Activated CD4-positive, alpha-beta memory T cell treated with anti-CD3 and anti-CD28 coated beads for 36 hours (primary cell): ENCODE measurements at regions of chr9 and their contacts with region 1.

Region 1: DNA sequence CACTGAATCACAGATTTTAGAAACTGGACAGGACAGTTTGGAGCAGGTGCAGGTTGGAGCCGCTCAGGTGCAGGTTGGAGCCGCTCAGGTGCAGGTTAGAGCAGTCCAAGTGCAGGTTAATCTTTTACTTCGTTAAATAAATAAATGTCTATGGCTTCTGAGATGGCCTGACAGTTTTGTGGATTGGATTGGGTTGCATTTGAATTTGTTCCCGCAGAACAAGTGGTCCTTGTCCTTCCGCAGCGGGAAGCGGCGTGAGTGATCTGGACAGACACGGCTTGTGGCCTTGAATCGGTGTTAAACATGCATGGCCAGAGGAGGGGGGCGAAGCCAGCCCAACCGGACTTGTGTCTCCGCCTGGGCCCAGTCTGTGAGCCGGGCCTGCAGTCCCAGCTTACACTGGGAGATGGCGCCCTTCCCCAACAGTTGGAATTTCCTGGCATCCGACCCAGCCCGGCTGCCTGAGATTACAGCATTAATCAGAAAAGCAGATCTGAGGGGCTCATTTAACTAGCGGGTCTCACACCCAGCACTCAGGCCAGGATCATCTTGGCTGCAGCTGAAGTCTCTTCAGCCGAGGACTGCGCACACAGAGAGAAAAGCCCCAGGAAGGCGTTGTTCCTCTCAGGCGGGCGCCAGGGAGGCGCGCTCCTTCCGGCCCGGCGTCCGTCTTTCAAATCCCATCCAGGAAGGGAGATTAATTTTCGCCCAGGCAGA is 1.5 kb upstream of the OLFM1 start:
- DNase-seq: peak; percentile 67
- H3K4me3 Mint-ChIP-seq: no peak overlapping the region
- H3K27ac Mint-ChIP-seq: no peak overlapping the region
- H3K4me1 Mint-ChIP-seq: peaks cover 3% of the 10 kb centered on the region
- H3K27me3 Mint-ChIP-seq: peaks cover 43% of the 10 kb centered on the region

Region 2: GRCh38 chr9:135060461-135061116 is 25.4 kb before region 1 on chr9:
- CTCF ChIA-PET with region 1: no interaction called
- POLR2A ChIA-PET with region 1: no interaction called
- intact Hi-C with region 1: no loop called
- DNase-seq: no peak
- H3K4me3 Mint-ChIP-seq: no peak overlapping the region
- H3K27ac Mint-ChIP-seq: no peak overlapping the region
- H3K4me1 Mint-ChIP-seq: peaks cover 3% of the 10 kb centered on the region
- H3K27me3 Mint-ChIP-seq: peaks cover 13% of the 10 kb centered on the region

Region 3: DNA sequence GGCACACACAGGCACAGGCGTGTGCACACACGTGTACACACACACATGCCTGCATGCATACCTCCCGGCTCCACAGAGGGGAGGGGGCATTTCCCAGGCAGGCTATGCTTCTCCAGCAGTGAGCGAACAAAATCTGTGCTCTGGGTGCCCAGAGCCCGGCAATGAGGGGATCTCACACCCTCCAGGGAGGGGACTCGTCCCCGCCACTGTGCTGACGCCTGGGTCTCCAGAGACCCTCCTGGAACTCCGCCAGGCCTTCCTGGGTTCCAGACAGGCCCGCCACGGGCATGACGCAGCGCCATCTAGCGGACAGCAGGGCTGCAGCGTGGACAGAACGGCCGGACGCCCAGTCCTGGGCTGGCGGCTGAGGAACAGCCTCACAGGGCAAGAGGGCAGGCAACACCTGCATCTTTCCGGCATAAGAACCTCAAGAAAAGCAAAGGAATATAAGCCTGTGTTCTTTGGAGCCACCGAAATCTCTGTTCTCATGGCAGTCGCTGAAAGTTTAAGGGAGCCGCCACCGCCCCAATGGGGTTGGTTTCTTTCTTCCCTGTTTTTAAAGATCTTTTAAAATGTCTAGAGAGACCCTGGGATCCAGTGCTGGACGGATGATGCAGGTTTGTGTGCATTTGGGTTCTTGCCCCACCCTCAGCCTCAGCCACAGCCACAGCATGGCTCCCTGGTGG is 258.0 kb after region 1 on chr9:
- CTCF ChIA-PET with region 1: no interaction called
- POLR2A ChIA-PET with region 1: no interaction called
- intact Hi-C with region 1: loop called (anchors 1 kb)
- DNase-seq: peak; percentile 57
- H3K4me3 Mint-ChIP-seq: no peak overlapping the region
- H3K27ac Mint-ChIP-seq: no peak overlapping the region
- H3K4me1 Mint-ChIP-seq: no peaks in the 10 kb centered on the region
- H3K27me3 Mint-ChIP-seq: peaks cover 17% of the 10 kb centered on the region

Region 4: GRCh38 chr9:135413459-135413858 is 327.5 kb after region 1 on chr9:
- CTCF ChIA-PET with region 1: no interaction called
- POLR2A ChIA-PET with region 1: no interaction called
- intact Hi-C with region 1: loop called (anchors 2 kb)
- DNase-seq: no peak
- H3K4me3 Mint-ChIP-seq: no peak overlapping the region
- H3K27ac Mint-ChIP-seq: no peak overlapping the region
- H3K4me1 Mint-ChIP-seq: no peaks in the 10 kb centered on the region
- H3K27me3 Mint-ChIP-seq: peaks cover 5% of the 10 kb centered on the region